Sigmoid colon (tissue), 7 donors: ENCODE measurements at regions of chr17 and their contacts with region 1.

Region 1: DNA sequence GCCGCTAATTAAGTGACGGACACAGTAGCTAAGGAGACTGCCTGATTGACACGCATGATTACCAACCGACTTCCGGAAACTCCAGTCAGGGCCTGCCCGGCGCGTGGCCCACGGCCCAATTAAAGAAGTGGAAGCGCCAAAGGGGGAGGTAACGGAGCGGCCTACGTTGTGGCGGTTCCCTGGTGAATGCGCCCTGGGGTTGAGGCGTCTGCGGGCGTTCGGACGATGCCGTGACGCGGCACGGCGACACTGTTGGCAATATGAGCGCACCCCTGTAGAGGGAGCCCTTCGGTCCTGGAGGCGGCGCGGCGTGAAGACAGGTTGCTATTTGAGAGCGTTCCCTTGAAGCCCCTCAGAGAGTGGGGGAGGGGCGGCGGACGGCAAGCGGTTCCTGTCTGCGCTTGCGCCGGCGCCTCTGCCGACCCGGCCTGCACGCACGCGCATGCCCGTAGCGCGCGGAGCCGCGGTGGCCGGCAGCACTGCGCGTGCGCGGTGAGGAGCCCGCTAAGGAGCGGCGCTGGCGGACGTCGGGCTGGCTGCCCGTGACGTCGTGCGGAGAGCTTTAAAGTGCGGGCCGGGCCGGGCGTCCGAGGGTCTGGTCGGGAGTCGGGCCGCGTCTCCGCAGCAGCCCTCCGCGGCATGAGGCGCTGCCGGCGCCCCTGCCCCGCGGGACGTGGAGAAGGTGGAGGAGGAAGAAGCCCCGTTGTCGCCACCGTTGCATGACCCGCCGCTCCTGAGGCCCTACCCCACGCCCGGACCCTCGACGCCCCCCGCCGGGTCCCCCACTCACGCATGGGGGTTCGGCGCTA is at the start of gene ALKBH5:
- DNase-seq: peak; percentile 99
- H3K4me3 ChIP-seq: peak within 1 kb of the TSS; percentile 87 to 94 (median 92)
- H3K27ac ChIP-seq: peak within 1 kb of the TSS; percentile 97 to 99 (median 98)
- H3K4me1 ChIP-seq: peaks cover 0 to 55% (median 51%) of the 10 kb centered on the region in 4 donors
- H3K27me3 ChIP-seq: no peaks in the 10 kb centered on the region
- CTCF ChIP-seq: no peak
- EP300 ChIP-seq: no peak
- POLR2A ChIP-seq: peak; percentile 71 to 77
- total RNA-seq, gene ALKBH5: 100 to 109 (median 104) TPM

Region 2: DNA sequence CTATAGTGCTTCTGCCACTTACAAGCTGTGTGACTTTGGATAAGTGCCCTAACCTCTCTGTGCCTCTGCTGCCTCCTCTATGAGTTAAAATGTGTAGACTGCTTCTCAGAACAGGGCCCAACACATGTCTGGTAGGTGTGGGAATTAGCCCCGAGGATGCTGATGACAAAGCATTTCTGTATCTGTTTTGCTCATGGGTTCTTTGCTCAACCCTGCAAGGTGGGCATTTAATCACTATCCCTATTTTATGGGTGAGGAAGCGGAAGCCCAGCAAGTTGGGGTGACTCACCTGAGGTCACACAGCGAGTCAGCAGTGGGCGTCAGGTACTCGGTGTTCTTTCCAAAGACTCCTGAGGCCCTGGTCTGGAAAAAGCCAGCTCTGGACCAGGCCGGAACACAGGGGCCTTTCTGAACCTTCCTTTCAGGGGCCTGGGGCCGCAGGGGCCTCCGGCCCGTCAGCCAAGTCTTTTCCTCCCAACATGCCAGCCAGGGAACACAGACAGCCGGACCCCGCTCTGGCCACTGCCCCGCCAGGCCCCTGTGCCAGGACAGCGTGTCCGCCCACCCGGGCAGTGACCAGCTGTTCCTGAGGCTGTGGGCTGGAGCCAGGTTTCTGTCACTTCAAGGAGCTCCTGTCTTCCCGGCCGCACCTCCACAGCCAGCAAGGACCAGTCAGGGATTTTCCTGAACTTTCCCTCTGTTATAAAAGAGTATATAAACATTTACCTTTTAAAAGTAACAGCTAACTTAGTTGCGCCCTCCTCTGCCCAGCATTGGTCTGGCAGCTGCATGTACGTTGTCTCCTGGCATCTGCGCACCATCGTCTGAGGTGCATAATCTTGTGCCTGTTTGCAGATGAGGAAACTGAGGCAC is 409.3 kb before region 1 on chr17:
- intact Hi-C with region 1: no loop called
- DNase-seq: peak; percentile 90
- H3K4me3 ChIP-seq: peak overlapping the region in 1 of 4 donors; percentile 20
- H3K27ac ChIP-seq: peak overlapping the region; percentile 86 to 93 (median 89)
- H3K4me1 ChIP-seq: peaks cover 0 to 84% (median 67%) of the 10 kb centered on the region in 4 donors
- H3K27me3 ChIP-seq: no peaks in the 10 kb centered on the region
- CTCF ChIP-seq: peak; percentile 29 to 60 (median 54)
- EP300 ChIP-seq: peak in 2 of 4 donors; percentile 63 to 81
- POLR2A ChIP-seq: no peak

Region 3: DNA sequence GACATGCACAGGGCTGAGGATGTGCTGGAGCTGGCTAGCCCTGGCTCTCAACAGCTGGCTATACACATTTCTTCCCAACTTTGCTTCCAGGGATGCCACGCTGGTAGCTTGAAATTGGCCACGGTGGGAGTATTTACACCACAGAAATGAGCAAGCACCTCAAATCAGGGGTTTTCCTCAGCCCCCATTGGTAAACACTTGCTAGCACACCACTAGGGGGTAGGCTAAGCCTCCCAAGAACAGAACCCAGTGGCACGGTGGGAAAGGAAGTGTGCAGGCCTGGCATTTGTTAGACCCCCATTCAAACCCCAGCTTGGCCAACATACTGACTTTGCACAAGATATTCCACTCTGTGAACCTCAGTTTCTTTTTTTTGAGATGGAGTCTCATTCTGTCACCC is 198.0 kb before region 1 on chr17:
- intact Hi-C with region 1: no loop called
- DNase-seq: no peak
- H3K4me3 ChIP-seq: no peak overlapping the region
- H3K27ac ChIP-seq: no peak overlapping the region
- H3K4me1 ChIP-seq: no peaks in the 10 kb centered on the region
- H3K27me3 ChIP-seq: no peaks in the 10 kb centered on the region
- CTCF ChIP-seq: no peak
- EP300 ChIP-seq: no peak
- POLR2A ChIP-seq: no peak

Region 4: DNA sequence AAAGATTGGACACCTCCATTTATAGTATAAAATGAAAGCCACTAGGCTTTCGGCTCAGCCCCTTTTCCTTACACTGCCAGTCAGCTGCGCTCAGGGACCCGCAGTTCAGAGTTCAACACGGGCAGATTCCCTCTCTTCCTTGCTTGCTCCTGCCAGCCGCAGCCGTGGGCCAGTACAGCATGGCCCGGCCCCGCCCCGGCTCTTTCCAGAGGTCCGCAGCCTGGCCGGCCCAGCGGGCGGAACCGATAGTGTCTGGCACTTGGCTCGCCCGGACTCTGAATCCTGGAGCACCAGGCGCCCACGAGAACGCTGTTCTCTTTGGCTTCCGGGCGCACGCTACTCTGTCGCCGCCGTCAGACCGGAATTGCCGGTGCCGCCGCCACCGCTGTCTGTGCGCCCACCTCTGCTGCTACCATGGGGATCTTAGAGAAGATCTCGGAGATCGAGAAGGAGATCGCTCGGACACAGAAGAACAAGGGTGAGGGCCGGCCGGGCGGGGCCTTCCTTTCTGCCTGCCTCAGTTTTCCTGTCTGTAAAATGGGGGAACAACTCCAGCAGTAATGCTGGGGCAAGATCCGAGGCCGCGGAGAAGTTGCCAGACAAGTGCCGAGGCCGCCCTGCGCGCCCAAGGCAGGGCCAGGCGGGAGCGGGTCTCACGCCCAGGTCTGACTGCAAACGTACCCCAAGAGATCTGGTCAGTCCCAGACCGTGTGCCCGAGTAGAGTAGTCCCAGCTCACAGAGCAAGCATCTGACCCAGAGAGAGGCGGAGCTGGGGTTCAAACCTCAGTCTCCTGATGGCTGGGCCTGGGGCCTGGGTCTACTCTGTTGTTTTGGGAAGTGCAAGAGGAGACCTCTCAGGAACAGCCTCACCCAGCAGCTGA is 95.7 kb before region 1 on chr17 and contains the start of gene DRG2:
- intact Hi-C with region 1: loop called (anchors 5 kb)
- DNase-seq: peak; percentile 96
- H3K4me3 ChIP-seq: peak within 1 kb of the TSS; percentile 62 to 93 (median 84)
- H3K27ac ChIP-seq: peak within 1 kb of the TSS; percentile 81 to 88 (median 84)
- H3K4me1 ChIP-seq: peaks cover 0 to 23% (median 10%) of the 10 kb centered on the region in 4 donors
- H3K27me3 ChIP-seq: no peaks in the 10 kb centered on the region
- CTCF ChIP-seq: no peak
- EP300 ChIP-seq: peak in 1 of 4 donors; percentile 28
- POLR2A ChIP-seq: no peak
- total RNA-seq, gene DRG2: 25.2 to 36.0 (median 34.4) TPM

Region 5: GRCh38 chr17:18141210-18141803 is 42.2 kb before region 1 on chr17:
- intact Hi-C with region 1: loop called (anchors 2 kb)
- DNase-seq: no peak
- H3K4me3 ChIP-seq: no peak overlapping the region
- H3K27ac ChIP-seq: no peak overlapping the region
- H3K4me1 ChIP-seq: peaks cover 0 to 7% (median 2%) of the 10 kb centered on the region in 4 donors
- H3K27me3 ChIP-seq: peaks cover 0 to 21% (median 0%) of the 10 kb centered on the region in 3 donors
- CTCF ChIP-seq: peak; percentile 23 to 55 (median 42)
- EP300 ChIP-seq: no peak
- POLR2A ChIP-seq: no peak

Region 6: GRCh38 chr17:18153749-18154161 is 29.8 kb before region 1 on chr17:
- intact Hi-C with region 1: loop called (anchors 5 kb)
- DNase-seq: peak; percentile 93
- H3K4me3 ChIP-seq: peak overlapping the region; percentile 45 to 61 (median 56)
- H3K27ac ChIP-seq: peak overlapping the region; percentile 64 to 74 (median 70)
- H3K4me1 ChIP-seq: peaks cover 0 to 21% (median 11%) of the 10 kb centered on the region in 4 donors
- H3K27me3 ChIP-seq: no peaks in the 10 kb centered on the region
- CTCF ChIP-seq: no peak
- EP300 ChIP-seq: no peak
- POLR2A ChIP-seq: no peak

Region 7: DNA sequence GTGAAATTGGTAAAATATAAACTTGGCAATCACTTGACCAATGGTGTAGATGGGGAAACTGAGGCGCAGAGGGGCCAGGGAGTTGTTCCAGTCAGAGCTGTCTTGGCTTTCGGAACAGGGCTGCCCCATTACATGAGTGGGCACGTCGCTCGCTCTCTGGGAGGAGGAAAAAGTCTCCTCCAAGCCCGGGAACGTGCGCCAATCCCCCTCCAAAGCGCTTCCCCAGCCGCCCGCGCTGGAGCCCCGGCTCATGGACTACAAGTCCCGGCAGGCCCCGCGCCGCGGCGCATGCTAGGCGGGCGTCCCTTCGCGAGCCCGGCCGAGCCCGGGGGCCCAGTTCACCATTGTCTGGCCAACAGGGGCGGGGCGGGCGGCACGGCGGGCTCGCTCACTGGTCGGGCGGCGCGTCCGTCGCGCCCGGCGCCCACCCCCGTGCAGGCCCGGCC is 41.6 kb after region 1 on chr17:
- intact Hi-C with region 1: loop called (anchors 2 kb)
- DNase-seq: peak; percentile 99
- H3K4me3 ChIP-seq: peak overlapping the region; percentile 21 to 68 (median 56)
- H3K27ac ChIP-seq: peak overlapping the region; percentile 54 to 70 (median 63)
- H3K4me1 ChIP-seq: peaks cover 0 to 26% (median 19%) of the 10 kb centered on the region in 4 donors
- H3K27me3 ChIP-seq: no peaks in the 10 kb centered on the region
- CTCF ChIP-seq: no peak
- EP300 ChIP-seq: no peak
- POLR2A ChIP-seq: no peak

Region 8: GRCh38 chr17:18260332-18261144 is 77.0 kb after region 1 on chr17 and contains the start of gene MIEF2:
- intact Hi-C with region 1: loop called (anchors 5 kb)
- DNase-seq: peak; percentile 98
- H3K4me3 ChIP-seq: peak within 1 kb of the TSS; percentile 83 to 96 (median 88)
- H3K27ac ChIP-seq: peak within 1 kb of the TSS; percentile 90 to 98 (median 95)
- H3K4me1 ChIP-seq: peaks cover 0 to 52% (median 43%) of the 10 kb centered on the region in 4 donors
- H3K27me3 ChIP-seq: no peaks in the 10 kb centered on the region
- CTCF ChIP-seq: no peak
- EP300 ChIP-seq: no peak
- POLR2A ChIP-seq: peak in 1 of 2 donors; percentile 30
- total RNA-seq, gene MIEF2: 8.7 to 14.4 (median 11.7) TPM